CD4-positive, alpha-beta memory T cell (primary cell): ENCODE measurements at regions of chr11 and their contacts with region 1.

Region 1: DNA sequence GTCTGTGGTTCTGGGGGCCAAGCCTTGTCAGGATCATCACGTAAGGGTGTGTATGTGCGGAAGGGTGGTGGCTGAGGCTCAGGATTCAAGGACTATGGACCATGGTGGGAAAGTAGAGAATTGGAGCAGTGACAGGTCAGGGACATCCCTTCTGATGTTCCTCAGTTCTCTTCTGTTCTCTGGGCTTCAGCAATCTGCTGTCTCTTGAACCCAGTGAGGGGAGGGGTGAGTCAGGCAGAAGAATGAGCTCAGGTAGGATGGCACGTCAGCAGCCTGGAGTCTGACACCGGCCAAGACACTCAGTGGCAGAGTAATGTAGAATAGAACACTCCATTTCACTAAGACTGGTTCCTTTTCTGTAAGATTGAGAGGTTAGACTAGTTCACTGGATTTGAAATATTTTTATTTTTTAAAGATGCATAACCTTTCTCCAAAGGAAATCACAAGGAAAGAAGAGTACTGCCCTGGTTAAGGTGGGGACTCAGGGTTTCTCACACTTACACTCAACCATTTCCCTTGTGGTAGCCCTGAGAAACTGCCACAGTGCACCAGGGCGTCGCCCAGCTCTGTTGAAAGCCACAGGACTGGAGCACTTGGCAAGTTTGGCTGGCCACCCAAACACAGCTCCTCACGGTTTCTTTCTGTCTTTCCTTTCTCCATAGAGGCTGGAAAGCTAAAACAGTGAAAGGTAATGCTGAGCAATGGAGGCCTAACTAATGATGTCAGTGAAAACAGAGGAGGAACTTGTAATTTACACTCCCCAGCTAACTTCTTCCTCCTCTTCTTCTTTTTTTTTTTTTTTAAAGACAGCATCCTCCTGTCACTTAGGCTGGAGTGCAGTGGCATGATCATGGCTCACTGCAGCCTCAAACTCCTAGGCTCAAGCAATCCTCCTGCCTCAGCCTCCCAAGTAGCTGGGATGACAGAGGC is 23.1 kb upstream of the MICAL2 start:
- DNase-seq: peak; percentile 39 to 63 (median 52)
- H3K4me3 ChIP-seq: peak overlapping the region; percentile 6 to 26
- H3K4me3 Mint-ChIP-seq: peak overlapping the region; percentile 53 to 81 (median 72)
- H3K27ac ChIP-seq: no peak overlapping the region
- H3K27ac Mint-ChIP-seq: peak overlapping the region; percentile 67 to 94 (median 90)
- H3K4me1 ChIP-seq: peaks cover 62% of the 10 kb centered on the region
- H3K4me1 Mint-ChIP-seq: peaks cover 59 to 83% (median 65%) of the 10 kb centered on the region in 4 donors
- H3K27me3 ChIP-seq: no peaks in the 10 kb centered on the region
- H3K27me3 Mint-ChIP-seq: no peaks in the 10 kb centered on the region

Region 2: GRCh38 chr11:12052676-12053605 is 34.4 kb before region 1 on chr11:
- CTCF ChIA-PET with region 1: interaction called, 16 read pairs
- POLR2A ChIA-PET with region 1: no interaction called
- intact Hi-C with region 1: no loop called
- DNase-seq: no peak
- H3K4me3 ChIP-seq: no peak overlapping the region
- H3K4me3 Mint-ChIP-seq: no peak overlapping the region
- H3K27ac ChIP-seq: no peak overlapping the region
- H3K27ac Mint-ChIP-seq: peak overlapping the region in 3 of 7 donors; percentile 17 to 36 (median 22)
- H3K4me1 ChIP-seq: no peaks in the 10 kb centered on the region
- H3K4me1 Mint-ChIP-seq: peaks cover 0 to 6% (median 0%) of the 10 kb centered on the region in 4 donors
- H3K27me3 ChIP-seq: no peaks in the 10 kb centered on the region
- H3K27me3 Mint-ChIP-seq: no peaks in the 10 kb centered on the region

Region 3: GRCh38 chr11:12110201-12110713 is 22.9 kb after region 1 on chr11 and contains the start of gene MICAL2:
- CTCF ChIA-PET with region 1: interaction called, 4 read pairs
- POLR2A ChIA-PET with region 1: interaction called, 5 read pairs
- intact Hi-C with region 1: loop called (anchors 2 kb)
- DNase-seq: peak; percentile 82 to 86 (median 84)
- H3K4me3 ChIP-seq: peak within 1 kb of the TSS; percentile 60 to 61
- H3K4me3 Mint-ChIP-seq: peak within 1 kb of the TSS; percentile 82 to 90 (median 85)
- H3K27ac ChIP-seq: peak within 1 kb of the TSS; percentile 32
- H3K27ac Mint-ChIP-seq: peak within 1 kb of the TSS; percentile 63 to 92 (median 82)
- H3K4me1 ChIP-seq: peaks cover 43% of the 10 kb centered on the region
- H3K4me1 Mint-ChIP-seq: peaks cover 17 to 34% (median 23%) of the 10 kb centered on the region in 4 donors
- H3K27me3 ChIP-seq: no peaks in the 10 kb centered on the region
- H3K27me3 Mint-ChIP-seq: no peaks in the 10 kb centered on the region
- total RNA-seq, gene MICAL2: 33.3 to 38.8 TPM

Region 4: DNA sequence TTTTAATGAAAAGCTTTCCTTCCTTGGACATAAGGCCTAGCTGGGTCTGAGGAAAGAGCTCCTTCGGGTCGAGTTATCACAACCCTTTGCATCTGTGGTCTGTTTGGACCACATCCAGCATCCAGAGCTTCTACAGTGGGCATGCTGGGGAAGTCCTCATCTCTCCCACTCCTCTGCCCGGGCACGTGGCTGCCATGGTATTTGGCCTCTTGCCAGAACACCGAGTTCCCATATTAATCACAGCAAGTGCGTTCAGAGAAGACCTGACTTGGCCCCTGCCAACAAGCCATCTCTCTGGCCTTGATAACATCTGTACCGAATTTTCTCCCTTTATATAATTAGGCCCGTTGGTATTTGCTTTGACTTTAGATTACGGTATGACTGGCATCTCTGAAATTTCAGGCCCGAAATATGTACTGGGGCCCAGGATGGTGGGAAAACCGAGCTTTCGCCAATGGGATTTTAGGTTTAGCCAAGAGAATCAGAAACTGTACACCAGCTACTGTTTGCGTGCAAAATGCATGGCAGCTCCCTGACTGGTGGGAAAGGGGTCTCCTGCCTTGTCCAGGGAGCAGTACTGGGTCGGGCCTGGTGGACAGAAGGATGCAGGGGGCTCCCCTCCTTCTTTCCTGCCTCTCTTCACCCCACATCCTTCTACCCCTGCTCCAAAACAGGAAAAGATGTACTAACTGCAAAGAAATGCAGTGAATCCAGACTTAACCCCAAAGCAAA is 113.1 kb after region 1 on chr11:
- CTCF ChIA-PET with region 1: interaction called, 10 read pairs
- POLR2A ChIA-PET with region 1: interaction called, 15 read pairs
- intact Hi-C with region 1: no loop called
- DNase-seq: no peak
- H3K4me3 ChIP-seq: no peak overlapping the region
- H3K4me3 Mint-ChIP-seq: peak overlapping the region in 4 of 8 donors; percentile 9 to 93 (median 66)
- H3K27ac ChIP-seq: peak overlapping the region; percentile 52
- H3K27ac Mint-ChIP-seq: peak overlapping the region; percentile 87 to 98 (median 94)
- H3K4me1 ChIP-seq: peaks cover 59% of the 10 kb centered on the region
- H3K4me1 Mint-ChIP-seq: peaks cover 48 to 67% (median 57%) of the 10 kb centered on the region in 4 donors
- H3K27me3 ChIP-seq: no peaks in the 10 kb centered on the region
- H3K27me3 Mint-ChIP-seq: no peaks in the 10 kb centered on the region